CD14-positive monocyte (primary cell): ENCODE measurements at regions of chr19 and their contacts with region 1.

Region 1: GRCh38 chr19:43784981-43785808 is 4.4 kb upstream of the KCNN4 start:
- DNase-seq: peak; percentile 71 to 89 (median 81)
- H3K4me3 ChIP-seq: peak overlapping the region in 1 of 3 experiments; percentile 55
- H3K4me3 Mint-ChIP-seq: peak overlapping the region; percentile 27 to 82
- H3K27ac ChIP-seq: peak overlapping the region; percentile 14 to 83
- H3K27ac Mint-ChIP-seq: peak overlapping the region; percentile 26 to 95 (median 81)
- H3K4me1 ChIP-seq: peaks cover 27 to 44% of the 10 kb centered on the region in 2 donors
- H3K4me1 Mint-ChIP-seq: peaks cover 44% of the 10 kb centered on the region
- H3K27me3 ChIP-seq: no peaks in the 10 kb centered on the region
- H3K27me3 Mint-ChIP-seq: peaks cover 0 to 5% (median 3%) of the 10 kb centered on the region in 3 donors
- CTCF ChIP-seq: peak; percentile 99

Region 2: DNA sequence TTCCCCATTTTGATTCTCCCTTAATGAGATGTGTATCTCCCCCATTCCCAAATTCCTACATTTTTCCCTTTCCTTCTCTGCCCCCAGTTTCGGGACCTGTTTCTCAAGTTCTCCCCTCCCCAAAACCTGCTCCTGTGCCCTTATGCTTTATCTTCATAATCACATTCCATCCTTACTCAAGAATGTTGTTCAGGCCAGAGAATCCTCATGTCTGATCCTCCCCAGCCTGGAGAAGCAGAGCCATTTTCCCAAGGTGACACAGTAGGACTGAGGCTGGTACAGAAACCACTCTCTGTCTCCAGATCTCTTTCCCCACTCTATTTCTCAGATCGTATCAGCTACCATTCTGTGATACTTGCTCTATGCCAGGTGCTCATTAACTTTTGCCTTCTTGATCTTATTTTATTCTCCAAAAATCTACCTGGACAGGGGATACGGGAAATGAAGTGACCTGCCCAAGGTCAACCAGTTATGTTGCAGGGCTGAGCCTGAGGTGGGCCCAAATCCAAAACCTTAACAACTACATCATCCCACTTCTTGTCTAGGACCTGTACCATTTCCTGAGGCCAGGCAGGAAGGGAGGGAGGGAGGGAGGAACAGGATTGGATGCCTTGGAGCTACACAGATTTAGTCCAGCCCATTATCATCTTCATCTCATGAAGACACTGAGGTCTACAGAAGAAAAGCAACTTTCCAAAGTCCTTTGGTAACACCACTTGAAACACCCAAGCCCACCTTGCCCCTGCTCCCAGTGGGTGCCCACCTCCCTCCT is 41.0 kb before region 1 on chr19:
- intact Hi-C with region 1: loop called (anchors 1 to 2 kb)
- DNase-seq: no peak
- H3K4me3 ChIP-seq: peak overlapping the region in 1 of 3 experiments; percentile 75
- H3K4me3 Mint-ChIP-seq: peak overlapping the region in 1 of 2 donors; percentile 88
- H3K27ac ChIP-seq: peak overlapping the region; percentile 77 to 78
- H3K27ac Mint-ChIP-seq: peak overlapping the region; percentile 90 to 97 (median 96)
- H3K4me1 ChIP-seq: peaks cover 17 to 20% of the 10 kb centered on the region in 2 donors
- H3K4me1 Mint-ChIP-seq: peaks cover 19% of the 10 kb centered on the region
- H3K27me3 ChIP-seq: no peaks in the 10 kb centered on the region
- H3K27me3 Mint-ChIP-seq: peaks cover 0 to 4% (median 0%) of the 10 kb centered on the region in 3 donors
- CTCF ChIP-seq: no peak

Region 3: DNA sequence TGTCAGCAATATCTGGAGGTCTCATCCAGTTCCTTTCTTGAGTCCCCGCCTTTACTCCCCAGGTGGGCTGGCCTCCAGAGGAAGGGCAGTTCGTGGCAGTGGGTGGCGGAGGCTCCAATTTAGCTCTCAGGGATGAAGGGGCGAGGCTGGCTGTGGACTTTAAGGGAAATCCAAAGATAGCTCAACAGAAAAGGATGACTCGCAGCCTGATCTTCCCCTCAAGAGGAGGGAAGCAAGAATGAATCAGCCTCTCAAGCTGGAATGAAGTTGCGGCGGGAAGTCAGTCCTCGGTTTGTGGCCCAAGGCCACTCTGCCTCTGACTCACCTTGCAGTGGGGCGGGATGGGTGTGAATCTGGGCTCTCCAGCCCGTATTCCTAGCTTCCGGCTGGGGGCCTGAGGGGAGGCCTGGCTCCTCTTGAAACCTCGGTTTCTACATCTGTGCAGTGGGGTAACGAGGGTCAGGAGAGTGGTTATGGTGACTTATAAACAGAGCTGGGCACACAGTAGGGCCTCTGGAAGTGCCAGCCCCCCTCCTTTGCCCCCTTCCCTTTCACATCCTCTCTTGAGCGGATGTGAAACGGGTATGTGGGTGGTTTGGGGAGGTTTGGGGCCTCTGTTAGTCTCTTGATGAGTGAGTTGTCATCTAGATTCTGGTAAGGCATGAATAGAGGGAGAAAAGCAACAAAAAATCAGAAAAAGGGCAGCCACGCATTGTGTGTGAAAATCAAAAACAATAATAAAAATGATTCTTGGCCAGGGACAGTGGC is 19.9 kb before region 1 on chr19:
- intact Hi-C with region 1: loop called in 1 of 2 experiments (anchors 2 kb)
- DNase-seq: peak; percentile 89 to 97 (median 96)
- H3K4me3 ChIP-seq: peak overlapping the region in 1 of 3 experiments; percentile 28
- H3K4me3 Mint-ChIP-seq: peak overlapping the region; percentile 16 to 69
- H3K27ac ChIP-seq: peak overlapping the region; percentile 65 to 81
- H3K27ac Mint-ChIP-seq: peak overlapping the region; percentile 90 to 98 (median 93)
- H3K4me1 ChIP-seq: peaks cover 70 to 73% of the 10 kb centered on the region in 2 donors
- H3K4me1 Mint-ChIP-seq: peaks cover 77% of the 10 kb centered on the region
- H3K27me3 ChIP-seq: no peaks in the 10 kb centered on the region
- H3K27me3 Mint-ChIP-seq: peaks cover 0 to 1% (median 0%) of the 10 kb centered on the region in 3 donors
- CTCF ChIP-seq: no peak